PC-3 (cell line): ENCODE measurements at regions of chr20 and their contacts with region 1.

Region 1: GRCh38 chr20:38434743-38435554 is at the start of gene SNHG17:
- DNase-seq: peak; percentile 94
- ATAC-seq: peak; percentile 84
- H3K4me3 ChIP-seq: peak within 1 kb of the TSS; percentile 95
- H3K27ac ChIP-seq: peak within 1 kb of the TSS; percentile 56
- H3K4me1 ChIP-seq: peaks cover 26% of the 10 kb centered on the region
- H3K27me3 ChIP-seq: no peaks in the 10 kb centered on the region
- CTCF ChIP-seq: peak; percentile 99
- total RNA-seq, gene SNHG17: 52.0 and 62.0 TPM in 2 replicates

Region 2: DNA sequence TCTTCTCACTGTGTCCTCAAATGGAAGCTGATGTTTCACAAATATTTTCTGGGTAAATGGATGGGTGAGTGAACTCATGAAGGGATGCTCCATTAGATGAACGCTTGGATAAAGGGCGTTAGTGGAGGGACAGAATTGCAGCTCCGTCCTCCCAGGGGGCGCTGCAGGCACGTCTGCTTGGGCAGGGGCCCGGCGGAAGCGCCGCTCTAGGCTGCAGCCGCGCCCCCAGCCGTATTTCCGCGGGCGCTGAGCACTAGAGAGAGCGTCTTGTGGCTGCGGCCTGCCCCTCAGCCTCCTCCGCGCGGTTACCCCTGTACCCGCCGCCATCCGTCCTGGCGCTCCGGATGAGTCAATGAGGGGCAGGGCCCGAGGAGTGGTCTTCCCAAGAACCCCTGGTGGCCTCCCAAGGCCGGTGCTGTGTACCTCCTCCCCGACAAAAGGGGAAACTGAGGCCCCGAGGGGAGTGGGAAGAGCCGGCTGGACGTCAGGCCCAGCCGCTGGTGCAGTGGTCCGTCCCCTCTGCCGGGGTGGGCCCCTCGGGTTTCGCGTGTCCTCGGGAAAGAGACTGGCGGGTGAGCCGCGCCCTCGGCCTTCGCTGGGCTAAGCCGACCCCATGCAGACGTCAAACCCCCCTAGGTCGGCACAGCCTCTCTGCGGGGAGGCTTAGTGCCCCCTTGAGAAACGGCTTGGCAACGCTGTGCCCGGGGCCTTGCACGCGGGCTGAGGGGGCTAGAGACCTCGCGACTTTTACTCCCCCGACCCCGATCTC is 11.7 kb after region 1 on chr20:
- CTCF ChIA-PET with region 1: interaction called, 7 read pairs
- POLR2A ChIA-PET with region 1: interaction called, 7 read pairs
- intact Hi-C with region 1: loop called (anchors 1 kb)
- DNase-seq: peak; percentile 92
- ATAC-seq: peak; percentile 89
- H3K4me3 ChIP-seq: peak overlapping the region; percentile 91
- H3K27ac ChIP-seq: peak overlapping the region; percentile 21
- H3K4me1 ChIP-seq: peaks cover 31% of the 10 kb centered on the region
- H3K27me3 ChIP-seq: no peaks in the 10 kb centered on the region
- CTCF ChIP-seq: peak; percentile 94